CD4-positive, alpha-beta memory T cell (primary cell): ENCODE measurements at regions of chr1 and their contacts with region 1.

Region 1: DNA sequence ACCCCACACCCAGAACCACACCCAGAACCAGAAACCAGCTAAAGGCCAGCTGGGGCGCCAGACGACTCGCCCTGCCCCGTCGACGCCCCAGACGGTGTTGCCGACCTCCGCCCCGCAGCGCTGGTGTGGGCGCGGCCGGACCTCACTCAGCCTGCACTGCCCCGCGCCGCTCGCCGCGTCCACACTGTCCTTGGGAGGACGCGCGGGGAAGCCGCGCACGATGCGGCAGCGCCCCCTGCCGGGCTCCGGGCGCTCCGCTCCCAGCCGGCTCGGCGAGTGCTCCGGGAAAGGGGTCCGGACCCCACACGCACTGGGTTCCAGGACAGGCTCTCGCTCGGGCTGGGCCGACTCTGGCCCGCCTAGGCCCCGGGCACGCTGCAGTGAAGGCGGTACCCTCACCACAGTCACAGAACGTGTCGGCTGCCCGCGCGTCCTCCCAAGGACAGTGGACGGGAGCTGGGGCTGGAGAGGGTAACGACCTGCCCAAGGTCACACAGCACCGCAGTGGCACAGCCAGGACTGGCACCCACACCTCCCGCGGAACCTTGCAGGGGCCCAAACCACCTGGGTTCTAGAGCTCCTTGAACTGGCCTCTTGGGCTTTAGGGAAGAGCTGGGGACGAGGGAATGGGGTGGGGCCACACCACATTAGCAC is 90.2 kb downstream of the DMRTA2 start:
- DNase-seq: peak in 4 of 5 donors; percentile 18 to 42 (median 40)
- H3K4me3 ChIP-seq: peak overlapping the region in 1 of 2 donors; percentile 41
- H3K4me3 Mint-ChIP-seq: peak overlapping the region; percentile 59 to 82 (median 72)
- H3K27ac ChIP-seq: no peak overlapping the region
- H3K27ac Mint-ChIP-seq: no peak overlapping the region
- H3K4me1 ChIP-seq: no peaks in the 10 kb centered on the region
- H3K4me1 Mint-ChIP-seq: peaks cover 4 to 12% (median 7%) of the 10 kb centered on the region in 4 donors
- H3K27me3 ChIP-seq: no peaks in the 10 kb centered on the region
- H3K27me3 Mint-ChIP-seq: peaks cover 26% of the 10 kb centered on the region in 2 donors

Region 2: GRCh38 chr1:50343323-50343722 is 10.3 kb after region 1 on chr1:
- CTCF ChIA-PET with region 1: interaction called, 38 read pairs
- POLR2A ChIA-PET with region 1: no interaction called
- intact Hi-C with region 1: no loop called
- DNase-seq: no peak
- H3K4me3 ChIP-seq: no peak overlapping the region
- H3K4me3 Mint-ChIP-seq: no peak overlapping the region
- H3K27ac ChIP-seq: no peak overlapping the region
- H3K27ac Mint-ChIP-seq: no peak overlapping the region
- H3K4me1 ChIP-seq: no peaks in the 10 kb centered on the region
- H3K4me1 Mint-ChIP-seq: no peaks in the 10 kb centered on the region
- H3K27me3 ChIP-seq: peaks cover 7% of the 10 kb centered on the region
- H3K27me3 Mint-ChIP-seq: peaks cover 13 to 26% of the 10 kb centered on the region in 2 donors

Region 3: GRCh38 chr1:50393522-50394120 is 60.6 kb after region 1 on chr1:
- CTCF ChIA-PET with region 1: no interaction called
- POLR2A ChIA-PET with region 1: no interaction called
- intact Hi-C with region 1: no loop called
- DNase-seq: no peak
- H3K4me3 ChIP-seq: no peak overlapping the region
- H3K4me3 Mint-ChIP-seq: no peak overlapping the region
- H3K27ac ChIP-seq: no peak overlapping the region
- H3K27ac Mint-ChIP-seq: no peak overlapping the region
- H3K4me1 ChIP-seq: no peaks in the 10 kb centered on the region
- H3K4me1 Mint-ChIP-seq: no peaks in the 10 kb centered on the region
- H3K27me3 ChIP-seq: no peaks in the 10 kb centered on the region
- H3K27me3 Mint-ChIP-seq: peaks cover 18 to 26% of the 10 kb centered on the region in 2 donors

Region 4: GRCh38 chr1:50521703-50522102 is 188.6 kb after region 1 on chr1:
- CTCF ChIA-PET with region 1: no interaction called
- POLR2A ChIA-PET with region 1: no interaction called
- intact Hi-C with region 1: no loop called
- DNase-seq: no peak
- H3K4me3 ChIP-seq: no peak overlapping the region
- H3K4me3 Mint-ChIP-seq: no peak overlapping the region
- H3K27ac ChIP-seq: no peak overlapping the region
- H3K27ac Mint-ChIP-seq: no peak overlapping the region
- H3K4me1 ChIP-seq: no peaks in the 10 kb centered on the region
- H3K4me1 Mint-ChIP-seq: no peaks in the 10 kb centered on the region
- H3K27me3 ChIP-seq: no peaks in the 10 kb centered on the region
- H3K27me3 Mint-ChIP-seq: no peaks in the 10 kb centered on the region